ENCODE measurements at regions of chr9 and their contacts with region 1.

Region 1: GRCh38 chr9:72022841-72023240 is 37.6 kb downstream of the C9orf57 start:
- DNase-seq: no peak
- H3K4me3 Mint-ChIP-seq: no peak overlapping the region
- H3K27ac Mint-ChIP-seq: no peak overlapping the region
- H3K4me1 Mint-ChIP-seq: peaks cover 5% of the 10 kb centered on the region
- H3K27me3 Mint-ChIP-seq: no peaks in the 10 kb centered on the region

Region 2: GRCh38 chr9:71285191-71285656 is 737.6 kb before region 1 on chr9:
- CTCF ChIA-PET with region 1: interaction called, 15 read pairs
- DNase-seq: peak; percentile 39
- H3K4me3 Mint-ChIP-seq: no peak overlapping the region
- H3K27ac Mint-ChIP-seq: no peak overlapping the region
- H3K4me1 Mint-ChIP-seq: no peaks in the 10 kb centered on the region
- H3K27me3 Mint-ChIP-seq: peaks cover 5% of the 10 kb centered on the region

Region 3: GRCh38 chr9:71628247-71628646 is 394.6 kb before region 1 on chr9:
- CTCF ChIA-PET with region 1: interaction called, 11 read pairs
- DNase-seq: no peak
- H3K4me3 Mint-ChIP-seq: no peak overlapping the region
- H3K27ac Mint-ChIP-seq: no peak overlapping the region
- H3K4me1 Mint-ChIP-seq: peaks cover 24% of the 10 kb centered on the region
- H3K27me3 Mint-ChIP-seq: peaks cover 26% of the 10 kb centered on the region

Region 4: GRCh38 chr9:71795097-71795813 is 227.6 kb before region 1 on chr9:
- CTCF ChIA-PET with region 1: interaction called, 10 read pairs
- DNase-seq: no peak
- H3K4me3 Mint-ChIP-seq: peak overlapping the region; percentile 46
- H3K27ac Mint-ChIP-seq: peak overlapping the region; percentile 98
- H3K4me1 Mint-ChIP-seq: peaks cover 59% of the 10 kb centered on the region
- H3K27me3 Mint-ChIP-seq: no peaks in the 10 kb centered on the region

Region 5: GRCh38 chr9:71819115-71819739 is 203.6 kb before region 1 on chr9:
- CTCF ChIA-PET with region 1: interaction called, 17 read pairs
- DNase-seq: peak; percentile 59
- H3K4me3 Mint-ChIP-seq: no peak overlapping the region
- H3K27ac Mint-ChIP-seq: no peak overlapping the region
- H3K4me1 Mint-ChIP-seq: peaks cover 18% of the 10 kb centered on the region
- H3K27me3 Mint-ChIP-seq: no peaks in the 10 kb centered on the region

Region 6: DNA sequence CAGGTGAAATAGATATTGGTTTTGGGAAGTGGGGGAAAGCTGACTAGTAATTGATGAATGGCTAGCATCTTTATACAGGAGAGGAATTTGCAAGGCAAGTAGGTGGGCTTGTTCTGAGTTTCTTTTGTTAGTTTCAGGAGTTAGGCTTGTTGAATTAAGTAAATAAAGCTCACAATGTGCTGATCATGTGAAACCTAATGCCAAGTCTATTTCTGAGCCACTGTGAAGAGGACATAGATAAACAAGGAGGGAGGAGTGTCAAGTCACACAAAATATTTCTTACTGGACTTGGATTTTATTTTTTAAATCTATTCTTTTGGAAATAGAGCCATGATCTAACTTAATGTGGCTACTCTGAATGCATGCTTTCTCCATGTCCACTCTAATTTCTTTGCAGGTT is 146.3 kb after region 1 on chr9:
- CTCF ChIA-PET with region 1: no interaction called
- DNase-seq: no peak
- H3K4me3 Mint-ChIP-seq: no peak overlapping the region
- H3K27ac Mint-ChIP-seq: no peak overlapping the region
- H3K4me1 Mint-ChIP-seq: no peaks in the 10 kb centered on the region
- H3K27me3 Mint-ChIP-seq: peaks cover 4% of the 10 kb centered on the region